GM12878 (cell line): ENCODE measurements at regions of chr2 and their contacts with region 1.

Region 1: GRCh38 chr2:229921892-229922445 is at the start of gene TRIP12:
- DNase-seq: peak; percentile 88
- ATAC-seq: peak; percentile 84
- H3K4me3 ChIP-seq: peak within 1 kb of the TSS; percentile 83
- H3K27ac ChIP-seq: peak within 1 kb of the TSS; percentile 98
- H3K4me1 ChIP-seq: no peaks in the 10 kb centered on the region
- H3K27me3 ChIP-seq: no peaks in the 10 kb centered on the region
- CTCF ChIP-seq: no peak
- EP300 ChIP-seq: peak in 1 of 2 experiments; percentile 26; a peak in 1 of 4 replicates
- POLR2A ChIP-seq: peak; percentile 63
- RAD21 ChIP-seq: no peak
- polyA plus RNA-seq, gene TRIP12: 23.1 to 23.9 TPM

Region 2: DNA sequence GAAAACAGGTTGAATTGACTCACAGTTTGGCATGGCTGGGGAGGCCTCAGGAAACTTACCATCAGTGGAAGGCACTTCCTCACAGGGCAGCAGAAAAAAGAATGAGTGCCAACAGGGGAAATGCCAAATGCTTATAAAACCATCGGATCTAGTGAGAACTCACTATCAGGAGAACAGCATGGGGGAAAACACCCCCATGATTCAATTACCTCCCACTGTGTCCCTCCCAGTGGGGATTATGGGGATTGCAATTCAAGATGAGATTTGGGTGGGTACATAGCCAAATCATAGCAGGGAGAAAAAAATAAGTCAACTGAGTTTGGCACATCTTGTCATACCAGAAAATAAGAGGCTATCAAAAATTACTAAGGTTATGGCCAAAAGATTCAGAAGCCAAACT is 96.5 kb before region 1 on chr2:
- CTCF ChIA-PET with region 1: interaction called, 3 read pairs
- POLR2A ChIA-PET with region 1: interaction called, 7 read pairs
- RAD21 ChIA-PET with region 1: interaction called, 3 read pairs
- SMC1A ChIA-PET with region 1: interaction called, 3 read pairs
- in situ Hi-C with region 1: no loop called
- intact Hi-C with region 1: loop called (anchors 1 kb)
- DNase-seq: no peak
- ATAC-seq: no peak
- H3K4me3 ChIP-seq: no peak overlapping the region
- H3K27ac ChIP-seq: no peak overlapping the region
- H3K4me1 ChIP-seq: peaks cover 20% of the 10 kb centered on the region
- H3K27me3 ChIP-seq: no peaks in the 10 kb centered on the region
- CTCF ChIP-seq: 0 out of 6 replicates have a peak, but pooled peaks of 1 of the 3 experiments have one; percentile 9
- EP300 ChIP-seq: no peak
- POLR2A ChIP-seq: no peak
- RAD21 ChIP-seq: no peak

Region 3: GRCh38 chr2:230000118-230000841 is 78.3 kb after region 1 on chr2:
- CTCF ChIA-PET with region 1: interaction called, 3 read pairs
- POLR2A ChIA-PET with region 1: no interaction called
- RAD21 ChIA-PET with region 1: interaction called, 4 read pairs
- SMC1A ChIA-PET with region 1: interaction called, 4 read pairs
- in situ Hi-C with region 1: no loop called
- intact Hi-C with region 1: loop called (anchors 2 kb)
- DNase-seq: peak; percentile 70
- ATAC-seq: peak; percentile 95
- H3K4me3 ChIP-seq: peak overlapping the region; percentile 37; the same call in 1 of the 2 replicates
- H3K27ac ChIP-seq: peak overlapping the region; percentile 61
- H3K4me1 ChIP-seq: peaks cover 9% of the 10 kb centered on the region
- H3K27me3 ChIP-seq: no peaks in the 10 kb centered on the region
- CTCF ChIP-seq: no peak
- EP300 ChIP-seq: peak in 1 of 2 experiments; percentile 78; a peak in 1 of 4 replicates
- POLR2A ChIP-seq: no peak
- RAD21 ChIP-seq: no peak

Region 4: DNA sequence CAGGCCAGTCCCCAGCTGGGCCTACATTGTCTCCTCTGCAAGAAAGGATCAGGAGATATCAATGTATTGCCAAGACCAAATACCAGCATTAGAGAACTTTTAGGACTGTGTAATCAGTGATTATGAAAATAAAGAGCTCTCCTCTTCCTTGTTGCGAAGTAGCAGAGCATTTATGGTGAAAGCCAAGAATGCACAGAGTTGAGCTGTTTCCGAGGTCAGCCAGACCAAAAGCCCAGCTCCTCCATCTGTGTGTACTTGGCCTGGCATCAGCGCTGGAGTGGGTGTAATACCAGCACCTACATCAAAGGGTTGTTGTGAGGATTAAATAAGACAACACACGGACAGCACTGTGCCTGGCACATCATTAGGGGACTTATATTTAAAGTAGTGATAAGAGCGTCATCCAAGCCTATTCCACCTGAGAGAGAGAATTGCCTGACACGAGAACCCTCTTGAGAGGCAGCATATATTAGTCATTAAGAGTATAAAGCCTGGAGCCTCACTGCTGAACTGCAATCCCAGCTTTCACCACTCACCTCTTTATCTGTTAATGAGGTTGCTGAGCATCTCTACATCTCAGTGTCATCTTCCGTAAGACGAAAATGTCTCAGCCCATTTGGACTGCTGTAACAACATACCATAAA is 154.1 kb after region 1 on chr2:
- CTCF ChIA-PET with region 1: no interaction called
- POLR2A ChIA-PET with region 1: no interaction called
- RAD21 ChIA-PET with region 1: no interaction called
- SMC1A ChIA-PET with region 1: no interaction called
- in situ Hi-C with region 1: no loop called
- intact Hi-C with region 1: no loop called
- DNase-seq: no peak
- ATAC-seq: 0 out of 3 replicates have a peak, but pooled peaks have one; percentile 42
- H3K4me3 ChIP-seq: no peak overlapping the region
- H3K27ac ChIP-seq: no peak overlapping the region
- H3K4me1 ChIP-seq: no peaks in the 10 kb centered on the region
- H3K27me3 ChIP-seq: no peaks in the 10 kb centered on the region
- CTCF ChIP-seq: no peak
- EP300 ChIP-seq: no peak
- POLR2A ChIP-seq: no peak
- RAD21 ChIP-seq: no peak

Region 5: DNA sequence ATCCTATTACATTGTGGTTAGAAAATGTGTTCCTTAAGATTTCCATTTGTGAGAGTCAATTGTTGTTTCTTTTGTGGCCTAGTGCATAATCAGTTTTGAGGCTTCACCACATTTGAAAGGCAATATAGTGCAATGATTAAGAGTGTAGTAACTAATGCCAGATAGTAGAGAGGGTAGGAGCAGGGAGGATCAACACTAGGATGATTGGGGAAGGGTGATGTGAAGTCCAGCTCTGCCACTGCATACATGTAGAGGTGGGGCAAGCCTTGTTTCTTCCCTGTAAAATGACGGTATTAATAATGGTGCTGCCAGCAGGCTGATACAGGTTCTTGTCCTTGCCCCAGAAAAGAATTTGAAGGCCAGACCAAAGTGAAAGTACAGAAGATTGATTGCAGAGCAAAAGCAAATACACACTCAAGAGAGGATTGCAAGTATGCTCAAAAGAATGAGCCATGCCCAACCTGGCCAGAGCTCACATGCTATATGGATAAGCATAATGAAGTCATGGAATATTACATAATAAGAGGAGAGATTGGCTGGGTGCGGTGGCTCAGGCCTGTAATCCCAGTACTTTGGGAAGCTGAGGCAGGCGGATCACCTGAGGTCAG is 502.0 kb after region 1 on chr2:
- CTCF ChIA-PET with region 1: no interaction called
- POLR2A ChIA-PET with region 1: no interaction called
- RAD21 ChIA-PET with region 1: no interaction called
- SMC1A ChIA-PET with region 1: no interaction called
- in situ Hi-C with region 1: no loop called
- intact Hi-C with region 1: no loop called
- DNase-seq: no peak
- ATAC-seq: peak; percentile 43
- H3K4me3 ChIP-seq: peak overlapping the region; percentile 52; the same call in 1 of the 2 replicates
- H3K27ac ChIP-seq: no peak overlapping the region
- H3K4me1 ChIP-seq: peaks cover 4% of the 10 kb centered on the region; the same call in 1 of the 2 replicates
- H3K27me3 ChIP-seq: no peaks in the 10 kb centered on the region
- CTCF ChIP-seq: no peak
- EP300 ChIP-seq: no peak
- POLR2A ChIP-seq: no peak
- RAD21 ChIP-seq: no peak